Mammary epithelial cell (primary cell): ENCODE measurements at regions of chr1 and their contacts with region 1.

Region 1: DNA sequence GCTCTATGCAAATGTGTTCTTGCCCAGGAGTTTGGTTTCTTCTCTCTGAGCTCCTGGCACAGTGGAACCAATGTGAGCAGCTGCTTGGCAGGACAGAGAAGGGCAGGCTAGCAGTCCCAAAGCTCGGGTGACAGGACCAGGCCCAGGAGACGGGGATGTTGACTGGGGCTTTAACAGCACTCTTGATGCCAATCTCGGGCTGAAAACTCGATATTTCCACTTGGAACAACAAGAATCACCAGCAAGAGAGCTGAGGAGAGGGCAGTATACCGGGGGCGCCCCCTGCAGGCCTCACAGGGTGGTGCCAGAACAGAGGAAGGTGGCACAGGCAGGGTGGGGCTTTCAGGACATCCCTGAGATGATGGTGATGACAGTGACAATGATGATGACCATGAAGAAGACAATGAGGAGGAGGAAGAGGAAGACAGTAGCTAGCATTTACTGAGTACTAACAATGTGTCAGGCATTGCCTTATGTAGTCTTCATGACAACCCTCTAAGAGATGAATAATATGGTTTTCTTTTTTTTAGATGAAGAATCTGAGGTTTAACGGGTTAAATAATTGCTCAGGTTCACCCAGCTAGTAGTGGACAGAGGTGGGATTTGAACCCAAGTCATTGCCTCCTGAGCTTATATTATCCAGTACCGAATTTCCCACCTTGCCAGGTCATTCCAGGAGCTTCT is 2.7 kb upstream of the KCNJ9 start:
- DNase-seq: peak; percentile 35
- H3K4me3 ChIP-seq: no peak overlapping the region
- H3K27ac ChIP-seq: no peak overlapping the region
- H3K4me1 ChIP-seq: no peaks in the 10 kb centered on the region
- H3K27me3 ChIP-seq: no peaks in the 10 kb centered on the region
- CTCF ChIP-seq: peak; percentile 90 to 95

Region 2: GRCh38 chr1:159913451-159914192 is 165.0 kb before region 1 on chr1:
- CTCF ChIA-PET with region 1: no interaction called
- dilution Hi-C with region 1: no loop called
- in situ Hi-C with region 1: no loop called
- intact Hi-C with region 1: no loop called
- DNase-seq: peak; percentile 58
- H3K4me3 ChIP-seq: no peak overlapping the region
- H3K27ac ChIP-seq: peak overlapping the region; percentile 21
- H3K4me1 ChIP-seq: peaks cover 68% of the 10 kb centered on the region
- H3K27me3 ChIP-seq: no peaks in the 10 kb centered on the region
- CTCF ChIP-seq: no peak

Region 3: GRCh38 chr1:159936273-159936904 is 142.3 kb before region 1 on chr1:
- CTCF ChIA-PET with region 1: no interaction called
- dilution Hi-C with region 1: no loop called
- in situ Hi-C with region 1: loop called in 1 of 2 experiments (anchors 10 kb)
- intact Hi-C with region 1: loop called (anchors 1 kb)
- DNase-seq: peak; percentile 51
- H3K4me3 ChIP-seq: no peak overlapping the region
- H3K27ac ChIP-seq: no peak overlapping the region
- H3K4me1 ChIP-seq: peaks cover 33% of the 10 kb centered on the region
- H3K27me3 ChIP-seq: no peaks in the 10 kb centered on the region
- CTCF ChIP-seq: peak; percentile 97 to 98

Region 4: GRCh38 chr1:159996653-159997052 is 82.0 kb before region 1 on chr1:
- CTCF ChIA-PET with region 1: no interaction called
- dilution Hi-C with region 1: no loop called
- in situ Hi-C with region 1: no loop called
- intact Hi-C with region 1: no loop called
- DNase-seq: peak; percentile 83
- H3K4me3 ChIP-seq: no peak overlapping the region
- H3K27ac ChIP-seq: no peak overlapping the region
- H3K4me1 ChIP-seq: peaks cover 16% of the 10 kb centered on the region
- H3K27me3 ChIP-seq: no peaks in the 10 kb centered on the region
- CTCF ChIP-seq: no peak

Region 5: DNA sequence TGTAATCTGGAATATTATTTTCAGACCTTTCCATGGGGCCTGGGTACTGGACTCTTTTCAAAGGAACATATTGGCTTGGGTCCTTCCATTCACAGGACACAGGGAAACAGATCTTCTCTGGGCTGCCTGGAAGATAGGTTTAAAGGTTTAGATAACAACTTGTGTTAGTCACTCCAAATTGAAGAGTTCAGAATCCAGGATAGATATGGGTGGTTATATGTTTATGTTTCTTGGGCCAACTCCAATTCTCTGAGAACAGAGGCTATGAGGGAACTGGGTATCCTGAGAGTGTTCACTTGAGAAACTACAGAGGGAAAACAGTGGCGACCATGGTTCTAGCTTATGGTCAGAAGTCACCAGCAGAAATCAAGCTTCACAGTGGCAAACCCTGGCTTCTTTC is 38.2 kb before region 1 on chr1:
- CTCF ChIA-PET with region 1: interaction called, 7 read pairs
- dilution Hi-C with region 1: loop called (anchors 5 kb)
- in situ Hi-C with region 1: loop called in 1 of 2 experiments (anchors 5 kb)
- intact Hi-C with region 1: no loop called
- DNase-seq: no peak
- H3K4me3 ChIP-seq: no peak overlapping the region
- H3K27ac ChIP-seq: no peak overlapping the region
- H3K4me1 ChIP-seq: no peaks in the 10 kb centered on the region
- H3K27me3 ChIP-seq: no peaks in the 10 kb centered on the region
- CTCF ChIP-seq: no peak

Region 6: DNA sequence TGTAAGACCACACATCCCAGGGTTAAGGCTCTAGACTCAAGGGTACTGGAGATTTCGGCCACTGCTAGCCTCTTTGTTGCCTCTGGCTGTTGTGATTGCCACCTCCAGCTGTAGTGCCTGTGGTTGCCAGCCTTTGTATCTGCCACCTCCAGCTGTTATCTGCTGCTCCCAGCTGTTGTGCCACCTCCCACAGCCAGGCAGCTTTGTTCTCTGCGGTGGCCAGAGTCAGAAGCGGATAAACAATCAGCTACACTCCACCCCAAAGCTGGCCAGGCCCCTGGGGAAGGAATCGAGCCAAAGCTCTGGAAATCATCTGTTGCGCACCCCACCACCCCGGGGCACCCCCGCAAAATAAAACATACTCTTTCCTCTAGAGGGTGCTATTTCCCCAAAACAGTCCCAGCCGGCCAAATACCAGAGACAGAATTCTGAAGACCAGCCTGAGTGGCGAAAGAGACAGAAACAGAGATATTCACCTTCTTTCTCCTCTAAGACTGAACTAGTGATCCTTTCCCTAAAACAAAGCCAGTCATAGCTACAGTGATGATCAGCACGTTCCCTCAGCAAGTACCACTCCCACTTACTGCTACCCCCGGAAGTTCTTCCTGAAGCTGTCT is 32.1 kb before region 1 on chr1:
- CTCF ChIA-PET with region 1: interaction called, 24 read pairs
- dilution Hi-C with region 1: loop called (anchors 5 kb)
- in situ Hi-C with region 1: loop called in 1 of 2 experiments (anchors 5 kb)
- intact Hi-C with region 1: loop called (anchors 1 kb)
- DNase-seq: peak; percentile 29
- H3K4me3 ChIP-seq: no peak overlapping the region
- H3K27ac ChIP-seq: no peak overlapping the region
- H3K4me1 ChIP-seq: no peaks in the 10 kb centered on the region
- H3K27me3 ChIP-seq: no peaks in the 10 kb centered on the region
- CTCF ChIP-seq: peak; percentile 41 to 73

Region 7: GRCh38 chr1:160058087-160058486 is 20.6 kb before region 1 on chr1:
- CTCF ChIA-PET with region 1: interaction called, 16 read pairs
- dilution Hi-C with region 1: no loop called
- in situ Hi-C with region 1: no loop called
- intact Hi-C with region 1: no loop called
- DNase-seq: no peak
- H3K4me3 ChIP-seq: no peak overlapping the region
- H3K27ac ChIP-seq: no peak overlapping the region
- H3K4me1 ChIP-seq: peaks cover 12% of the 10 kb centered on the region
- H3K27me3 ChIP-seq: no peaks in the 10 kb centered on the region
- CTCF ChIP-seq: peak; percentile 23 to 37